Ascending aorta (tissue), 2 donors: ENCODE measurements at regions of chr12 and their contacts with region 1.

Region 1: GRCh38 chr12:27821259-27821973 is 41.4 kb upstream of the MANSC4 start:
- DNase-seq: no peak
- H3K4me3 ChIP-seq: peak overlapping the region in 1 of 2 donors; percentile 37
- H3K27ac ChIP-seq: no peak overlapping the region
- H3K4me1 ChIP-seq: peaks cover 0 to 8% of the 10 kb centered on the region in 2 donors
- H3K27me3 ChIP-seq: no peaks in the 10 kb centered on the region
- CTCF ChIP-seq: peak; percentile 56 to 82 (median 81)

Region 2: GRCh38 chr12:27733052-27733656 is 88.3 kb before region 1 on chr12:
- intact Hi-C with region 1: loop called (anchors 1 kb)
- DNase-seq: no peak
- H3K4me3 ChIP-seq: no peak overlapping the region
- H3K27ac ChIP-seq: no peak overlapping the region
- H3K4me1 ChIP-seq: no peaks in the 10 kb centered on the region
- H3K27me3 ChIP-seq: no peaks in the 10 kb centered on the region
- CTCF ChIP-seq: peak; percentile 78 to 89 (median 81)

Region 3: GRCh38 chr12:27751386-27752047 is 69.9 kb before region 1 on chr12:
- intact Hi-C with region 1: loop called (anchors 5 kb)
- DNase-seq: no peak
- H3K4me3 ChIP-seq: no peak overlapping the region
- H3K27ac ChIP-seq: no peak overlapping the region
- H3K4me1 ChIP-seq: peaks cover 4 to 19% of the 10 kb centered on the region in 2 donors
- H3K27me3 ChIP-seq: no peaks in the 10 kb centered on the region
- CTCF ChIP-seq: no peak

Region 4: GRCh38 chr12:27779920-27780611 is 41.4 kb before region 1 on chr12 and contains the starts of genes KLHL42 and MANSC4:
- intact Hi-C with region 1: loop called (anchors 5 kb)
- DNase-seq: peak in 1 of 2 donors; percentile 87
- H3K4me3 ChIP-seq: peak within 1 kb of the TSS; percentile 89 to 91
- H3K27ac ChIP-seq: peak within 1 kb of the TSS; percentile 92 to 94
- H3K4me1 ChIP-seq: peaks cover 0 to 11% of the 10 kb centered on the region in 2 donors
- H3K27me3 ChIP-seq: no peaks in the 10 kb centered on the region
- CTCF ChIP-seq: peak in 1 of 3 experiments; percentile 12
- total RNA-seq, gene KLHL42: 36.7 TPM
- total RNA-seq, gene MANSC4: not detected

Region 5: GRCh38 chr12:27940756-27941402 is 119.5 kb after region 1 on chr12:
- intact Hi-C with region 1: loop called (anchors 5 kb)
- DNase-seq: peak; percentile 23 to 86
- H3K4me3 ChIP-seq: no peak overlapping the region
- H3K27ac ChIP-seq: no peak overlapping the region
- H3K4me1 ChIP-seq: no peaks in the 10 kb centered on the region
- H3K27me3 ChIP-seq: no peaks in the 10 kb centered on the region
- CTCF ChIP-seq: peak; percentile 61 to 86 (median 68)